ENCODE measurements at regions of chr7 and their contacts with region 1.

Region 1: DNA sequence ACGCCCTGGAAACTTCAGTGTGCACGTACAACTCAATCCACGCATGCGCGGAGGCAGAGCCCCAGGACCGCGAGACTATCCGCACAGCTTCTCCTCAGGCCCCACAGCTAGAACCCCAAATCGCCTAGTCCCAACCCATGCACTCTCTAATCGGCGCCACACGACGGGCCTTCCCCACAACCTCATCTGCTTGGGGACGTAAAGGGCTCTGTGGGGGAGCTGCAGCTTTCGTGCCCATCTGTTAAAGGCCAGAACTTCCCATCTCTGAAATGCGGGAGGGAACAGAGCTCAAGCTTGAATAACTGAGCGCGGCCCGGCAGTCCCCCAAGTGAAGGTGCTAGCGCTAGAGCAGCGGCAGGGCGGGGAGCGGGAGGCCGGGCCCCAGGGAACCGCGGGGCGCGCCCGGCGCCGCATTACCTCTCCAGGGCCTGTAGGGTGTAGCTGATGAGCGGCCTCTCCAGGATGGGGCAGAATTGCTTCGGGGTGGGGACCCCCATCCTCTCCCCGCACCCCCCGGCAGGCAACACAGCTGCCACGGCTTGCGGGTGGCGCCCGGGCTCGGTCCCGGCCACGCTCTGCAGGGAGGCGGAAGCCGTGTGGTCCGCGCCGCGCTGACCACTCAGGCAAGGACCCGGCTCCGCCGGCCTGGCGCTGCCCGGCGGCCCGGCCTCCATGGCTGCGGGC is 547 bp downstream of the CRPPA start:
- DNase-seq: peak; percentile 95

Region 2: DNA sequence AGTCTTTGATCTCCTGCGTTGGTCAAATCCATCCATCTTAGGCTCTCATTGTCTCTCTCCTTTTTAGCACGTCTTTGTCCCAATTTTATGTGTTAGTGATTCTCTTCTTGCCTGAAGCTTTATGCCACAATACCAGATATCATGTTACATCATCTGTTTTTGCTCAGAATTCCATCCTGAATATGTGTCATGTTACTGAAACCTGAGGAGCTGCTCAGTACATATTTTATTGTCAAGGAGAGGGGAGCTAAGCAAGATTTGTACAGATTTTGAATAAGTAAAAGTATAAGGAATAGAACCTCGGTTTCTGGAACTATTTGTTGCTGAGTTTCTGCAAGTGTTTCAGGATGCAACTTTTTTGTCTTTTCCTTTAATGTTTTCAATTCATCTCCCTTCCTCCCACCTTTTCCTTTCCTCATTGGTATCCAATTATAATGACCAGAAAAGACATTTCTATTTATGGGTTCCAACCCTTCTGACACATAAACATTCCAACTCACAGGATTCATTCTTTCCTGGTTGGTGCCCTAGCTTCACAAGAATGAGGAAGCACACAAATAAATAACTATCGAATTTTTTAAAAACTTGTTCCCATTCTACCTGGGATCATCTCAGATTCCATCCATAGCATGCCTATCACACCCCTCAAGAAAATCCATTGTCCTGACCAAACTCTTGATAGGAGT is 291.2 kb before region 1 on chr7:
- in situ Hi-C with region 1: loop called (anchors 25 kb)
- DNase-seq: no peak

Region 3: DNA sequence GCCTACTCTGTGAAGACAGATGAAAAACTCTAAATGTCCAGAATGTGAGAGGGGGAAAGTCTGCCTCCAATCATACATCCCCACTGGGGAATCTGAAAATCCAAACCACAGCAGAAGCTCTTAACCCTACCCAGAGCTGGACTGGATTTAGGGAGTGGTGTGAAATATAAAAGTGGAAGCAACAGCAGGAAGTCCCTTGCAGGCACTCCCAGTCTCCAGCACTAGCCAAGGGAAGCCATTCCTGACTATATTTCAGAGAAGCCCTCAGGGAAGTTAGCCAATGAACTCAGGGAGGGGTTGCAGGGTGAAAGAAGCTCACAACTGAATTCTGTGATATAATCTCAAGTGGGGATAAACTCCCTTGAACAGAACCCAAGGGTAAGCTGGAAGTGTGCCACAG is 50.9 kb before region 1 on chr7:
- in situ Hi-C with region 1: no loop called
- DNase-seq: no peak

Measured in SK-MEL-5 (cell line).